ENCODE measurements at regions of chr5 and their contacts with region 1.

Region 1: DNA sequence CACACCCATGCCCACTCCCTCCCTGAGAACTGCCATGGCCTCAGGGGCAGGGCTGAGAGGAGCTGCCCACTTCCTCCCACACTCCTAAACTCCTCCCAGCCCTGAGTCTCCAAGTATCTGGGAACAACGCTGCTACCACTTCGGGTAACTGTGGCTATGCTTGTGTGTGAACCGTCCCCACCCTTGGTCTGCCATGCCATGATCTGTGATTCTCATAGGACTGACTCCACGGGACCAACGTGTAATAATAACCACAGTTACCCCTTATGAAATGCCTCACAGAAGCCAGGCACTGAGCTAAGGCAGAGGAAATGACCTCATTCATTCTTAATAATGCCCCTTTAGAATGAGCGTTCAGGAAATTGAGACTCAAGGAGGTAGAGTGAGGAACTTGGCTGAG is 103.9 kb upstream of the SMIM23 start:
- DNase-seq: no peak
- H3K4me3 ChIP-seq: no peak overlapping the region
- H3K27ac ChIP-seq: no peak overlapping the region
- H3K4me1 ChIP-seq: no peaks in the 10 kb centered on the region; a peak in 1 of 7 replicates
- H3K27me3 ChIP-seq: peaks cover 0 to 4% (median 1%) of the 10 kb centered on the region in 4 experiments; a peak in 3 of 7 replicates
- CTCF ChIP-seq: no peak
- EP300 ChIP-seq: no peak
- POLR2A ChIP-seq: no peak
- RAD21 ChIP-seq: no peak

Region 2: DNA sequence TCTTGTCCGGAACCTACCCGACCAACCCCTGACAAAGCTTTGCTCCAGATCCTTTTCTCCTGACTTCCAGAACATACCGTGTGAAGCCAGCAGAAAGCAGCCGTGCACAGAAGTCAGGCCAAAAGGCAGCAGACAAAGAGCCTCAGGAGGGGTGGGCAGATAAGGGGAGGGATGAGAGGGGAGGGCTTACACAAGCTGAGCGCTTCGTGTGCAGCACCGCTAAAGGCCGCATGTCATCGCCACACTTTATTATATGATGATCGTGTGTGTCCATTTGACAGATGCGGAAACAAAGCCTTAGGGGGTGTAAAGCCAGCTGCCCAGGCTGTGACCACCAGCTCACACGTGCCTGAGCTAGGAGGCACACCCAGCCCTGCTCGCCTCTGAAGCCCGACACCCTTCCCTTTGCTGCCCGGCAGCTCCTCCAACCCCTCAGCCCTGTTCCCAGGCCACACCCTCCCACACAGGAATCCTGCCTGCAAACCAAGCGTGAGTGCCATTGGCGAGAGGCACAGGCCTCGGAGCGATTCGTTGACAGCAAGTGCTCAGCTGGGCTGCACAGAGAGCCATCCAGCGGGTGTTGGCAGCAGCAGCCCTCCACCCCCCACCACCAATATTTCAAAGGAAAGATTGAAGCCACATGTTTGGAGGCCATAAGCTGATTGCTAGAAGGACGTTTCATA is 66.6 kb before region 1 on chr5:
- CTCF ChIA-PET with region 1: interaction called, 10 read pairs
- POLR2A ChIA-PET with region 1: no interaction called
- DNase-seq: peak in 1 of 2 experiments; percentile 67
- H3K4me3 ChIP-seq: no peak overlapping the region
- H3K27ac ChIP-seq: no peak overlapping the region
- H3K4me1 ChIP-seq: peaks cover 0 to 14% (median 12%) of the 10 kb centered on the region in 4 experiments; a peak in 4 of 7 replicates
- H3K27me3 ChIP-seq: peaks cover 0 to 50% (median 34%) of the 10 kb centered on the region in 4 experiments; a peak in 6 of 7 replicates
- CTCF ChIP-seq: no peak
- EP300 ChIP-seq: no peak
- POLR2A ChIP-seq: no peak
- RAD21 ChIP-seq: no peak

Region 3: DNA sequence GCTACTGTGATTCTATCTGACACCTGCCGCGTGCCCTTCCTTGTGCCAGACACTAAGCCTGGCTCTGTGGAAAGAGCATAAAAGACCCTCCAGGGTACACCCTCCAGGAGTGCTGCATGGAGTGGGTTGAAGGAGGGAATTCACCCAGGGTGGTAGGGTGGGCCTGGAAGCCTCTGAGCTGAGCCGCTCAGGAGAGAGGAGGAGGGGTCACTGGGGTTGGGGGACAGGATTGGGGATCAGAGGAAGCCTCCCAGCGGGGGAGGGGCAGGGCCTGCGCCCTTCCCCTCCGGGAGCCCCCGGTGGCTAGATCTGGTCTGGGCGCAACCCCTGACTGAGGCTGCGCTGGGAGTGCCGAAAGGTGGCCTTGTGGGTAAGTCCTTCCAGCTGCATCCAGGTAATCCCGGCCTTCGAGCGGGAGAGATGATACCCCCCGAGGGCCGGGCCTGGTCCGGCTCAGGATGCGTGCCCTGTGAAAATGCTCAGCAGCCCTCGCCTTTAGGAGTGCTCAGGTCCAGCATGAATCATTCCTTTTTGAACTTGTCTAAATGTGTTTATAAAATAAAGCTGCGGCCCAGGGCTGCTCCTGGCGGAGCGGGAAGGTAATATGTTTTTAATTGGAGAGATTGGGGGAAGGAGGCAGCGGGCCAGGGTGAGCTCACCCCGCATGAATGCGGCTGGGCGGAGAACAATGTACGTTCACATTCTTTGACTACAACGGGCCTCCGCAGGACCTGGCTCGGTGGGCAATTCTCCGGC is 14.2 kb before region 1 on chr5:
- CTCF ChIA-PET with region 1: interaction called, 12 read pairs
- POLR2A ChIA-PET with region 1: interaction called, 12 read pairs
- DNase-seq: peak; percentile 56 to 82
- H3K4me3 ChIP-seq: peak overlapping the region in 1 of 4 experiments; percentile 46; a peak in 2 of 8 replicates
- H3K27ac ChIP-seq: no peak overlapping the region
- H3K4me1 ChIP-seq: peaks cover 0 to 12% (median 6%) of the 10 kb centered on the region in 4 experiments; a peak in 6 of 7 replicates
- H3K27me3 ChIP-seq: peaks cover 0 to 2% (median 0%) of the 10 kb centered on the region in 4 experiments; a peak in 3 of 7 replicates
- CTCF ChIP-seq: no peak
- EP300 ChIP-seq: no peak
- POLR2A ChIP-seq: no peak
- RAD21 ChIP-seq: no peak

Region 4: GRCh38 chr5:171724468-171725204 is 43.0 kb after region 1 on chr5:
- CTCF ChIA-PET with region 1: no interaction called
- POLR2A ChIA-PET with region 1: no interaction called
- DNase-seq: peak in 1 of 2 experiments; percentile 39
- H3K4me3 ChIP-seq: no peak overlapping the region
- H3K27ac ChIP-seq: no peak overlapping the region
- H3K4me1 ChIP-seq: peaks cover 0 to 8% (median 3%) of the 10 kb centered on the region in 4 experiments; a peak in 3 of 7 replicates
- H3K27me3 ChIP-seq: no peaks in the 10 kb centered on the region
- CTCF ChIP-seq: no peak
- EP300 ChIP-seq: no peak
- POLR2A ChIP-seq: no peak
- RAD21 ChIP-seq: no peak